H1 (cell line): ENCODE measurements at regions of chr1 and their contacts with region 1.

Region 1: GRCh38 chr1:17606826-17607440 is 67.4 kb downstream of the ARHGEF10L start:
- DNase-seq: peak; percentile 47 to 94
- H3K4me3 ChIP-seq: no peak overlapping the region
- H3K27ac ChIP-seq: no peak overlapping the region
- H3K4me1 ChIP-seq: 0 out of 7 replicates have a peak, but pooled peaks cover 0 to 2% (median 0%) of the 10 kb centered on the region in 4 experiments
- H3K27me3 ChIP-seq: no peaks in the 10 kb centered on the region
- CTCF ChIP-seq: peak; percentile 93 to 96 (median 95)
- EP300 ChIP-seq: no peak
- POLR2A ChIP-seq: no peak
- RAD21 ChIP-seq: peak; percentile 96 to 97

Region 2: DNA sequence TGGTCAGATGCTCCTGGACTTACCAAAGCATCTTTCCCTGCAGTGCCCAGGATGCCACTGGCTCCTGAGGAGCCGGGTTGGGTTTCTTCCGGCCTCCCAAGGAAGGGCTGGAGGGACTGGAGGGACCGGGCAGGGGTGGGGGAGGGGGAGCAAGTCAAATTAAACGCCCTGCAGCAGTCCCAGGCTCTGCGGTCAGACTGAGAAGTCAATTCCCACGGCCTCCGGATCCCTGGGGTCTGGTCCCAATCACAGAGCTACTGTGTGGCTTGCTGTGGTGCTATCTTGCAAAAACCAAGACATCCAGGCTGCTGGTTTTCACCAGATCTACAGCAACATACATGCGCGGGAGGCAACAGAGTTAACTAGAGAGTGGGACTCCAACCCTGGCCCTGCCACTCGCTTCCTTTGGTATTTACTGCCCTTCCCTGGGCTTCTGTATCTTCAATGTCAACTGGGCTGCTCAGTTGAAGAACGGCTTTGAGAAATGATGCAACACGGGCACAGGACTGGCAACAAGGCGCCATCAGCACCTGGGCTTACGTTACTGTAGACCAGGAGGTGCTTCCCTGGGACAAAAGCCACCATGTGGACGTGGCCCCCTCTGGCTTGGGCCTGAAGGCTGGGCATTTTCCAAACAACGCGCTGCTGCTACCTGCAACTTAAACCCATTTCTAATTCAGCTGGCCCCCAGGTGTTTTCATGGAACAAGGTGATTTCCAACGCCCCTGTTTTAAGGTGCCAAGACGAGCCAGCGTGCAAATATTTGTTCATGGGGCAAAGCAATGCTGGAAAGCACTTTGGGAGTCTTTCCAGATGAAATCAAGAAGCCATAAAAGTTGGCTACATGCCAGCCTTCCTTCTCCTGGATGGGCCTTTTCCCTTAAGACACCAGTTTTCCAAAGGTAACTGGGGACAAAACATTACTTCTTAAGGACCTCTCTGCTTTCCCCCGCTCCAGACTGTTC is 179.0 kb before region 1 on chr1:
- CTCF ChIA-PET with region 1: no interaction called
- POLR2A ChIA-PET with region 1: no interaction called
- DNase-seq: no peak
- H3K4me3 ChIP-seq: no peak overlapping the region
- H3K27ac ChIP-seq: 0 out of 2 replicates have a peak overlapping the region, but pooled peaks have one; percentile 29
- H3K4me1 ChIP-seq: peaks cover 2 to 21% (median 15%) of the 10 kb centered on the region in 4 experiments
- H3K27me3 ChIP-seq: no peaks in the 10 kb centered on the region
- CTCF ChIP-seq: no peak
- EP300 ChIP-seq: no peak
- POLR2A ChIP-seq: peak; percentile 15 to 45; a peak in 1 of 3 replicates
- RAD21 ChIP-seq: no peak

Region 3: DNA sequence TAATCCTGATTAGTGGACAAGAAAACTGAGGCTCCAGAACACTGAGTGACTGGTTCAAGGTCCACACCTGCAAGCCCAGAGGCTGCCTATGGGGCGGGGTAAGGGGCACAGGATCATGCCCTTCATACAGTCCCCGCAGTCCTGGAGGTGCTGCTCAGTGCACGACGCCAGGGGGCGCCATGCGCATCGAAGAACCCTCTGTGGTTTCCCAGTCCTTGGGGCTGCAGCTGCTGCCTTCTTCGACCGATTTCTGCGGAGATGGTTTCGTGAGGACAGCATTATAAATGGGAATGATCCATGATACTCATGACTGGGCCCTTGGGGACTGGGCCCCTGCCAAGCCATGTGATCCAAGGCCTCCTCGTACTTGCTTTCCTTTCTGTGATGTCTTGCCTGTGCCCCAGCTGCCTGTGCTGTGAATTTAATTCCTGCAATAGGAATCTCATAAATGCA is 104.6 kb before region 1 on chr1:
- CTCF ChIA-PET with region 1: interaction called, 1,640 read pairs
- POLR2A ChIA-PET with region 1: interaction called, 5 read pairs
- DNase-seq: peak; percentile 88 to 99
- H3K4me3 ChIP-seq: no peak overlapping the region
- H3K27ac ChIP-seq: no peak overlapping the region
- H3K4me1 ChIP-seq: peaks cover 0 to 2% (median 0%) of the 10 kb centered on the region in 4 experiments; a peak in 2 of 7 replicates
- H3K27me3 ChIP-seq: no peaks in the 10 kb centered on the region
- CTCF ChIP-seq: peak; percentile 98
- EP300 ChIP-seq: no peak
- POLR2A ChIP-seq: no peak
- RAD21 ChIP-seq: peak; percentile 98 to 99

Region 4: GRCh38 chr1:17540255-17541001 is 66.5 kb before region 1 on chr1:
- CTCF ChIA-PET with region 1: interaction called, 28 read pairs
- POLR2A ChIA-PET with region 1: interaction called, 3 read pairs
- DNase-seq: peak; percentile 66 to 90
- H3K4me3 ChIP-seq: peak overlapping the region; percentile 77 to 93 (median 87)
- H3K27ac ChIP-seq: peak overlapping the region; percentile 83
- H3K4me1 ChIP-seq: peaks cover 16 to 24% (median 20%) of the 10 kb centered on the region in 4 experiments
- H3K27me3 ChIP-seq: no peaks in the 10 kb centered on the region
- CTCF ChIP-seq: no peak
- EP300 ChIP-seq: no peak
- POLR2A ChIP-seq: peak; percentile 34 to 78
- RAD21 ChIP-seq: peak in 1 of 2 experiments; percentile 15; a peak in 1 of 4 replicates

Region 5: GRCh38 chr1:17561561-17561985 is 45.4 kb before region 1 on chr1:
- CTCF ChIA-PET with region 1: interaction called, 12 read pairs
- POLR2A ChIA-PET with region 1: no interaction called
- DNase-seq: no peak
- H3K4me3 ChIP-seq: no peak overlapping the region
- H3K27ac ChIP-seq: 0 out of 2 replicates have a peak overlapping the region, but pooled peaks have one; percentile 30
- H3K4me1 ChIP-seq: peaks cover 11 to 62% (median 39%) of the 10 kb centered on the region in 4 experiments
- H3K27me3 ChIP-seq: no peaks in the 10 kb centered on the region
- CTCF ChIP-seq: no peak
- EP300 ChIP-seq: no peak
- POLR2A ChIP-seq: no peak
- RAD21 ChIP-seq: no peak

Region 6: DNA sequence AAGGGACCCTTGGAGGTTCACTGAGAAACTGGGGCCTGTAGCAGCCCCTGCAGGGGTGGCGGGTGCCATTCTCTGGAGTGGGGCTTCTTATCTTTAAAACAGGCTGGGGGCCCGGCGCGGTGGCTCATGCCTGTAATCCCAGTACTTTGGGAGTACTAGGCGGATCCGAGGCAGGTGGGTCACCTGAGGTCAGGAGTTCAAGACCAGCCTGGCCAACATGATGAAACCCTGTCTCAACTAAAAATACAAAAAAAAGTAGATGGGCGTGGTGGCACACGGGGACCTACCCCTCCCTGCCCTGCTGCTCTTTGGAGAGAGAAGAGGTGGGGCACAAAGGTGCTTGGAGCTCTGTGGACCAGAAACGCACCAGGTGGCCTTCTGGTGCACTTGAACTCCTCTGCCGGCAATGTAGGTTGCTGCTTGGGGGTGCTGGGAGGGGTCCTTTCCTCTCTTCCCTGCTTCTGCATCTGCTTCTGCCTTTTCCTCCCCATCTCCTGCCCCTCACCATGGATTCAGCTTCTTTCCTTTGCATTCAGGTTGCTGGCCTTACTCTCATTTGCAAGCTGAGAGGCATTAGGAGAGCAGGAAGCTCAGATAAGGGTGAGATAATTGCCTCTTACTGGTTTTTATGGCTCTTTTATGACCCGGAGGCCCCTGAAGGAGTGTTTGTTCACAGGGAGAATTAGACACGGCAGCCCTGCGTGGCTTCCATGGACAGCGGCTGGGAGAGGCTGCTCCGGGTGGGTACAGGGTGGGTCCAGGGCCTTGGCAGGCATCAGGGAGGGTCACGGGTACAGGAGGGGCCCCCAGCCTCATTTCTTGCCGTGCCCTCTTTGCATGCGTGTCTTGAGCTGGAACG is 10.1 kb before region 1 on chr1:
- CTCF ChIA-PET with region 1: interaction called, 612 read pairs
- POLR2A ChIA-PET with region 1: interaction called, 3 read pairs
- DNase-seq: no peak
- H3K4me3 ChIP-seq: no peak overlapping the region
- H3K27ac ChIP-seq: no peak overlapping the region
- H3K4me1 ChIP-seq: peaks cover 0 to 2% (median under 1%) of the 10 kb centered on the region in 4 experiments; a peak in 3 of 7 replicates
- H3K27me3 ChIP-seq: no peaks in the 10 kb centered on the region; a peak in 1 of 7 replicates
- CTCF ChIP-seq: no peak
- EP300 ChIP-seq: no peak
- POLR2A ChIP-seq: no peak
- RAD21 ChIP-seq: no peak

Region 7: GRCh38 chr1:17624611-17625233 is 17.8 kb after region 1 on chr1:
- CTCF ChIA-PET with region 1: interaction called, 76 read pairs
- POLR2A ChIA-PET with region 1: interaction called, 3 read pairs
- DNase-seq: no peak
- H3K4me3 ChIP-seq: no peak overlapping the region
- H3K27ac ChIP-seq: no peak overlapping the region
- H3K4me1 ChIP-seq: peaks cover 0 to 2% (median 0%) of the 10 kb centered on the region in 4 experiments; a peak in 1 of 7 replicates
- H3K27me3 ChIP-seq: no peaks in the 10 kb centered on the region
- CTCF ChIP-seq: no peak
- EP300 ChIP-seq: no peak
- POLR2A ChIP-seq: no peak
- RAD21 ChIP-seq: no peak

Region 8: GRCh38 chr1:17687145-17687544 is 80.2 kb after region 1 on chr1:
- CTCF ChIA-PET with region 1: no interaction called
- POLR2A ChIA-PET with region 1: no interaction called
- DNase-seq: no peak
- H3K4me3 ChIP-seq: no peak overlapping the region
- H3K27ac ChIP-seq: no peak overlapping the region
- H3K4me1 ChIP-seq: peaks cover 0 to 13% (median 5%) of the 10 kb centered on the region in 4 experiments; a peak in 5 of 7 replicates
- H3K27me3 ChIP-seq: no peaks in the 10 kb centered on the region
- CTCF ChIP-seq: no peak
- EP300 ChIP-seq: no peak
- POLR2A ChIP-seq: no peak
- RAD21 ChIP-seq: no peak

Region 9: GRCh38 chr1:17732475-17732874 is 125.5 kb after region 1 on chr1:
- CTCF ChIA-PET with region 1: no interaction called
- POLR2A ChIA-PET with region 1: no interaction called
- DNase-seq: no peak
- H3K4me3 ChIP-seq: no peak overlapping the region
- H3K27ac ChIP-seq: no peak overlapping the region
- H3K4me1 ChIP-seq: peaks cover 0 to 7% (median 1%) of the 10 kb centered on the region in 4 experiments; a peak in 5 of 7 replicates
- H3K27me3 ChIP-seq: no peaks in the 10 kb centered on the region
- CTCF ChIP-seq: no peak
- EP300 ChIP-seq: no peak
- POLR2A ChIP-seq: no peak
- RAD21 ChIP-seq: no peak

Region 10: DNA sequence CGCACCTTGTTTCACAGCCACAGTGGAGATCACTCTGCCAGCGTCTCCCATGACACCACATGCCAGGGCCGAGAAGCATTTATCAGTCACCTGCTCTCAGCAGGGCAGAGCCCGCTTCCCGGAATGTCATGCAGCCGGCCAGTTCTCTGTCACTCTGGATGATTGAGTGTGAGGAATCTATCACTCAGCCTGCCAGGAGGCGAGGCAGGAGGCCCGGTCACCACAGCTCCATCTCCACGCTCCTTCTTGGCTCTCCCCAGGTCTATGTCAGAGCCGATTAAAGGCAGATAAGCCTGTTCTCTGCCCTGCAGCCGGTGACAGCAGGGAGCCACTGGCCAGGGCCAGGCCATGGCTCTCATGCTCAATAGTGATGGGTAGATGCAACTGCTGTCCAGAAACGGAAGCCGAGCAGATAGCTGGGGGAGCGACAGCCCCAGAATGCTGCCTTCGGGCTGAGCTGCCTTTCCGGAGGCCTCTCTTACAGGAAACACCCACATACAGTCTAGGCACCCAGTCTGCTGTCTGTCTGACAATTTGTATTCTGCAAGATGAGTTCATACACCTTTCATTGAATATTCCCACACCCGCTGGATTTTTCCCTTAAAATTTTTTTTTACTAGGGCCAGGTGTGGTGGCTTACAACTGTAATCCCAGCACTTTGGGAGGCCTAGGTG is 212.3 kb after region 1 on chr1:
- CTCF ChIA-PET with region 1: no interaction called
- POLR2A ChIA-PET with region 1: no interaction called
- DNase-seq: no peak
- H3K4me3 ChIP-seq: no peak overlapping the region
- H3K27ac ChIP-seq: no peak overlapping the region
- H3K4me1 ChIP-seq: no peaks in the 10 kb centered on the region
- H3K27me3 ChIP-seq: no peaks in the 10 kb centered on the region
- CTCF ChIP-seq: no peak
- EP300 ChIP-seq: no peak
- POLR2A ChIP-seq: no peak
- RAD21 ChIP-seq: no peak